ENCODE measurements at regions of chr7 and their contacts with region 1.

Region 1: DNA sequence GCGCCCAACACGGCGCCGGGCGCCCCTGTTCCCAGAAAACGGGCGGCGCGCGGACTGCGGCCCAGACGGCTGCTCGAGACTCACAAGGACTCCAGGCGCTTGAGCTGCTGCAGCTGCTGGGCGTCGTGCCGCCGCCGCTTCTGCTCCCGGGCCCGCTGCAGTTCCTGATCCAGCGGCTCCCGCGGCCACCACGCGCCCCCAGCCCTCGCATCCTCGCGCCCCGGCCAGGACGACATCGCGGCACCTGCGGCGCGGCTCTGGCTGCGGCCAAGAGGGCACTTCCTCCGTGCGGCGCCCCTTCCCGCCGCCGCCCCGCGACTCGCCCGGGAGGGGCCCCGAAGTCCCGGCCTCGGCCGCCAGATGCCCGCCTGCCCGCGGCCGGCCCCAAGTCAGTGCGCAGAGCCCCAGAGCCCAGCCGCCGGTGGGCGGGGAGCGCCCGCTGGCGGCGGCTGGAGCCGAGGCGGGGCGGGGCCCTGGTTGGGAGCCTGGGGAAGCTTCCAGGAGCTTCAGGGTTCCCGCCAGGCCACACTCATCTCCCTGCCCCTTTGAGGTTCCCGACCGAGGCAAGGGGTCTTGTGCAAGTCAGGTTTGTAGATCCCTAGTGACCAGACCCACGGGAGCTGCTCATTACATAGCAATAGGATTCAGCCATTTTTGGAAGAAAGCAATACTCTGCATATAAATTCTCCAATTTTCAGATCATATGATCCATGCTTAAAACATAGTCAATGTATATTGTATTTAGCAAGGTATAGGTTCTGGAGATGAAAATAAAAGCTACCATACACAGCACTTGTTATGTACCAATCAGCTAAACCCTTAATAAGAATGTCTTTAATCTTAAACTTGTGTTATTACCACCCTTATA is 14.2 kb upstream of the FKBP9 start:
- DNase-seq: peak; percentile 85
- ATAC-seq: peak; percentile 93
- H3K4me3 Mint-ChIP-seq: peak overlapping the region; percentile 87
- H3K27ac Mint-ChIP-seq: no peak overlapping the region
- H3K4me1 Mint-ChIP-seq: peaks cover 10% of the 10 kb centered on the region
- H3K27me3 Mint-ChIP-seq: peaks cover 9% of the 10 kb centered on the region

Region 2: DNA sequence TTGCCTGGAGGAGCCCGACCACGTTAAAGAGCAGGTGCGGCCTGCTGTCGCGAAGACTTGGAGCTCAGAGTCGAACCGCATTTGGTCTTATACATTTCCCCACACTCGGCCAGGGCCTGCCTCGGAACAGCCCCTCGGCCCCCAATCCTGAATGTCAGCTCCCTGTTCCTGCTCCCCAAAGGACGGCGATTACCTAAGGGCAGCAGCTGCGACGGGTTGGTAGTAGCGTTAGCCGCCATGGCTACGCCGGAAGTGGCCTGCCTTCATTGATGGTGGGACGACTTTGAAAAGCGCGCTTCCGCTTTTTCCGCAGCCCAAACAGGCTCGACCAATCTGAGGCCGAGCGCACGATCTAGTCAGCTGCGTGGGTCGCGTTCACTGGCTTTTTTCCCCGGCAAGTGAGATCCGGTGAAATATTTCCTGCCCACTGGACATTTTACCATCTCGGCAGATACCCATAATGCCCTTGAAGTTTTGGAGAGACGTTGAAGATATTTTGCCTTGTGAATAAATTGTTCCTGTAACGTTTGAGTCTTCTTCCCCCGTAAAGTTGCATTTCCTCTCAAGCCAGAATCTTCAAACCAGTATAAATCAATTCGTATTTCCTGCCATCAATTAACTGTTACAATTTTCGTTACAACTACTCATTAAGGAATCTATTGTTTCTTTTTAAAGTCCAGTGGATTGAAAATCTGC is 452.7 kb before region 1 on chr7 and contains the start of gene LSM5:
- CTCF ChIA-PET with region 1: no interaction called
- POLR2A ChIA-PET with region 1: no interaction called
- intact Hi-C with region 1: loop called in 1 of 2 experiments (anchors 1 kb)
- DNase-seq: peak; percentile 95
- ATAC-seq: peak; percentile 70
- H3K4me3 Mint-ChIP-seq: peak within 1 kb of the TSS; percentile 82
- H3K27ac Mint-ChIP-seq: peak within 1 kb of the TSS; percentile 99
- H3K4me1 Mint-ChIP-seq: peaks cover 27% of the 10 kb centered on the region
- H3K27me3 Mint-ChIP-seq: no peaks in the 10 kb centered on the region
- total RNA-seq, gene LSM5: 75.6 to 135 TPM

Region 3: GRCh38 chr7:32761451-32762205 is 181.4 kb before region 1 on chr7:
- CTCF ChIA-PET with region 1: interaction called, 3 read pairs
- POLR2A ChIA-PET with region 1: no interaction called
- intact Hi-C with region 1: loop called in 1 of 2 experiments (anchors 1 kb)
- DNase-seq: peak; percentile 11
- ATAC-seq: no peak
- H3K4me3 Mint-ChIP-seq: no peak overlapping the region
- H3K27ac Mint-ChIP-seq: no peak overlapping the region
- H3K4me1 Mint-ChIP-seq: peaks cover 9% of the 10 kb centered on the region
- H3K27me3 Mint-ChIP-seq: peaks cover 43% of the 10 kb centered on the region

Region 4: DNA sequence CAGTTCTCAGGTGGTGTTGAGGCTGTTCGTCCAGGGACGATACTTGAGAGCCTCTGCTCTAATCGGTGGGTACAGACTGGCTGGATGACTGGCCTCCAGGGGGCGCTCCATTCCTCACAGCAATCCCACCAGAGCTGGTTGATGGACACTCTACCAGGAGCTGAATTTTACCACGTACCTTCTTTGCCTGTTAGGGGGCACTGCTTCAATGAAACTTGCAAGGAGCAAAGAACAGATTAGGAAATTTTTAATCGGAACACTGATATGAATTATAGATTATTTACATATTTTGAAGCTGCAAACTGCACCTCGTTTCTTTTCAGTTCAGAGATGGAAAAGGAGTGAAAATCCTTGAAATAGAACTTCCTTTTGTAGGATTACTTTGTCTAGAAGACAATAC is 96.3 kb before region 1 on chr7:
- CTCF ChIA-PET with region 1: interaction called, 43 read pairs
- POLR2A ChIA-PET with region 1: no interaction called
- intact Hi-C with region 1: loop called (anchors 1 kb)
- DNase-seq: peak; percentile 95
- ATAC-seq: peak; percentile 100
- H3K4me3 Mint-ChIP-seq: no peak overlapping the region
- H3K27ac Mint-ChIP-seq: no peak overlapping the region
- H3K4me1 Mint-ChIP-seq: peaks cover 7% of the 10 kb centered on the region
- H3K27me3 Mint-ChIP-seq: peaks cover 19% of the 10 kb centered on the region

Region 5: DNA sequence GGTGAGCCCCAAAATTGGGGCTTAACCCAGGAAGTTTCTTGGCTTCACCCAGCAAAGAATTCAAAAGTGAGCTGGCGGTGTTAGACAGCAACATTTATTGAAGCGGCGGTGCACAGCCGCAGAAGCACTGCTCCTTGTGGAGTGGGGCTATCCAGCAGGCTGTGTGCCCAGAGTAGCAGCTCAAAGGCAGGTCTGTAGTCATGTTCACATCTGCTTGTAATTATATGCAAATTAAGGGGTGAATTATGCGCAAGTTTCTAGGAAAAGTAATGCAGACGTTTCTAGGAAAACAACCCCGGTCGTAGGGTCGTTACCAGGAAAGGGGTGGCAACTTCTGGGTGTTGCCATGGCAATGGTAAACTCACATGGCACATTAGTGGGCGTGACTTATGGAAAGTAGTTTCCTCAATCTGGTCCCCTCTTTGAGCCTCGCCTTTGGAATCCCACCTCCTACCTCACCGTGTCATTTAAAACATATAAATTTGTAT is 37.8 kb before region 1 on chr7:
- CTCF ChIA-PET with region 1: interaction called, 4 read pairs
- POLR2A ChIA-PET with region 1: no interaction called
- intact Hi-C with region 1: loop called (anchors 2 kb)
- DNase-seq: peak; percentile 84
- ATAC-seq: peak; percentile 93
- H3K4me3 Mint-ChIP-seq: peak overlapping the region; percentile 69
- H3K27ac Mint-ChIP-seq: peak overlapping the region; percentile 86
- H3K4me1 Mint-ChIP-seq: peaks cover 15% of the 10 kb centered on the region
- H3K27me3 Mint-ChIP-seq: no peaks in the 10 kb centered on the region

Region 6: DNA sequence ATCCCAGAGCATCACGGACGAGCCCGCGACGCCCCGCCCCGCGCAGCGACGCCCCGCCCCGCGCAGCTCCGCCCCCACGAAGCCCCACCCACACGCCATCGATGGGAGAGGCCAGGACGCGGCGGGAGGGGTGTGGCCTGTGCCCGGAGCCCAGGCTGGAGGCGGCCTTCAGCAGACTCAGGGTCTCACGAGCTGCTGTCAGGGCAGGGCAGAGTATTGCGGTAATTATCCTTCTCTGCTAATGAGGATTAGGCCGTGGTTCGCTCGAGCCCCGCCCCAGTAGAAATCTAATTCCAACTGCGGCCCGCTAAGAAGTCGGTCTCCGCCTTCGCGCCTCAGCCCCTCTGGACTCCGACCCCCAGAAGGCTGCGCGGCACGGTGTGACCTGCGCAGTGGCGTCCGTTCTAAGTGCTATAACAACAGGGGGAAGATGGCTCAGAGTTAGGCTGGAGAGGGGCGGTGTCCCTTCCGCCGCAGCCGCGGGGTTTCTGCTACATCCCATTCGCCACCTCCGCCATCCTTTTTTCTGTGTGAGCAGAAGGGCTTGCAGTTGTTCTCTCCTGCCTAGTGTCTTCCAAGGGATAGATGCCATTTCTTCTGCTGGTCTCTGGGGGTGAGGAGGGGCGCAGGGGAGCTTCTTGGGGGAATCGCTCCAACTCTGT is 119.9 kb after region 1 on chr7:
- CTCF ChIA-PET with region 1: no interaction called
- POLR2A ChIA-PET with region 1: no interaction called
- intact Hi-C with region 1: loop called in 1 of 2 experiments (anchors 2 kb)
- DNase-seq: peak; percentile 95
- ATAC-seq: peak; percentile 96
- H3K4me3 Mint-ChIP-seq: peak overlapping the region; percentile 95
- H3K27ac Mint-ChIP-seq: peak overlapping the region; percentile 93
- H3K4me1 Mint-ChIP-seq: peaks cover 32% of the 10 kb centered on the region
- H3K27me3 Mint-ChIP-seq: no peaks in the 10 kb centered on the region